Caco-2 (cell line): ENCODE measurements at regions of chr1 and their contacts with region 1.

Region 1: GRCh38 chr1:244796718-244797406 is 38.6 kb upstream of the COX20 start:
- DNase-seq: peak; percentile 63 to 74
- H3K4me3 ChIP-seq: no peak overlapping the region
- H3K4me3 Mint-ChIP-seq: no peak overlapping the region
- H3K27ac Mint-ChIP-seq: no peak overlapping the region
- H3K4me1 ChIP-seq: peaks cover 3% of the 10 kb centered on the region
- H3K4me1 Mint-ChIP-seq: peaks cover 9% of the 10 kb centered on the region
- H3K27me3 ChIP-seq: no peaks in the 10 kb centered on the region
- H3K27me3 Mint-ChIP-seq: no peaks in the 10 kb centered on the region
- CTCF ChIP-seq: peak; percentile 76 to 86

Region 2: DNA sequence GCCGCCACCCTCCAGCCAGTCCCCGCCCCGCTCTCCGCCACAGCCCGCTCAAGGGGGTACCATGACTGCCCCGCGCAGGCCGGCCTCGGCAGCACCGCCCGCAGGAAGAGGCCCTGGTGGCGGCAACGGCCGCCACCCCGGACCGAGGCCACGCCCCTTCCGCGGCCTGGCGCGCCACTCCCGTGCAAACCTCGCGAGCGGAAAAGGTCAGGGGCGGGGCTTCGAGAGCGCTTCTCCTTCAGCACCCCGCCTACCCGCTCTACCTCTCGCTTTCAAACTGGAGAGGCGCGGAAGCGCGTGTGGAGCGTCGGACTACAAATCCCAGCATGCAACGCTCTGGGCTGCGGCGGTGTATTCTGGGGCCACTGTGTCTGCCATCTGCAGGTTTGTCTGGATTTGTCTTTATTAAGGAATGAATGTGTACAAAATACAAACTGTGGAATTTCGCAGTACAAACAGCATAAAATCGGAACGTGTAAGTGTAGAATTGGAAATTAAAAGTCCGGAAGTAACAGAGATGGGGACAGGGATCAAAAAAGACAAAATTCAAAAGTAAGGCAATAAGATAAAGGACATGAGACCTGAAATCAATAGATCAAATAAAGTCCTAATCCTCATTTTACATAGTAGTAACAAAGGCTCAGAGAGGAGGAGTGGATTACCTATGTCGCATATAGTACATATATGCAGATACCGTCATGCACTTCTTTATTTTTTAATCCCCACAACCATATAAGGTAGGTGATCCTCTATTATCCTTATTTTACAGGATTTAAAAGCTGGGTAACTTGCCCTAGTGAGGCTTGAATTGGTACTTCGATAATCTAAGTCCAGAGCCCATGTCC is 344.7 kb before region 1 on chr1:
- CTCF ChIA-PET with region 1: no interaction called
- POLR2A ChIA-PET with region 1: no interaction called
- intact Hi-C with region 1: loop called (anchors 10 kb)
- DNase-seq: peak; percentile 98 to 99
- H3K4me3 ChIP-seq: peak overlapping the region; percentile 96
- H3K4me3 Mint-ChIP-seq: peak overlapping the region; percentile 76
- H3K27ac Mint-ChIP-seq: peak overlapping the region; percentile 75
- H3K4me1 ChIP-seq: peaks cover 38% of the 10 kb centered on the region
- H3K4me1 Mint-ChIP-seq: peaks cover 49% of the 10 kb centered on the region
- H3K27me3 ChIP-seq: no peaks in the 10 kb centered on the region
- H3K27me3 Mint-ChIP-seq: no peaks in the 10 kb centered on the region
- CTCF ChIP-seq: peak; percentile 30 to 33

Region 3: GRCh38 chr1:244603498-244603897 is 193.4 kb before region 1 on chr1:
- CTCF ChIA-PET with region 1: interaction called, 20 read pairs
- POLR2A ChIA-PET with region 1: no interaction called
- intact Hi-C with region 1: loop called (anchors 1 kb)
- DNase-seq: peak in 1 of 2 experiments; percentile 26
- H3K4me3 ChIP-seq: no peak overlapping the region
- H3K4me3 Mint-ChIP-seq: no peak overlapping the region
- H3K27ac Mint-ChIP-seq: no peak overlapping the region
- H3K4me1 ChIP-seq: no peaks in the 10 kb centered on the region
- H3K4me1 Mint-ChIP-seq: no peaks in the 10 kb centered on the region
- H3K27me3 ChIP-seq: no peaks in the 10 kb centered on the region
- H3K27me3 Mint-ChIP-seq: no peaks in the 10 kb centered on the region
- CTCF ChIP-seq: peak; percentile 60 to 81

Region 4: GRCh38 chr1:244712669-244713068 is 84.2 kb before region 1 on chr1:
- CTCF ChIA-PET with region 1: no interaction called
- POLR2A ChIA-PET with region 1: no interaction called
- intact Hi-C with region 1: loop called (anchors 10 kb)
- DNase-seq: no peak
- H3K4me3 ChIP-seq: no peak overlapping the region
- H3K4me3 Mint-ChIP-seq: no peak overlapping the region
- H3K27ac Mint-ChIP-seq: no peak overlapping the region
- H3K4me1 ChIP-seq: no peaks in the 10 kb centered on the region
- H3K4me1 Mint-ChIP-seq: no peaks in the 10 kb centered on the region
- H3K27me3 ChIP-seq: no peaks in the 10 kb centered on the region
- H3K27me3 Mint-ChIP-seq: no peaks in the 10 kb centered on the region
- CTCF ChIP-seq: no peak